ENCODE measurements at regions of chr11 and their contacts with region 1.

Region 1: GRCh38 chr11:86041975-86042378 is 26.9 kb downstream of the PICALM start:
- ATAC-seq: peak; percentile 59 to 95 (median 80)
- H3K4me3 ChIP-seq: no peak overlapping the region
- H3K27ac ChIP-seq: no peak overlapping the region
- H3K4me1 ChIP-seq: no peaks in the 10 kb centered on the region

Region 2: DNA sequence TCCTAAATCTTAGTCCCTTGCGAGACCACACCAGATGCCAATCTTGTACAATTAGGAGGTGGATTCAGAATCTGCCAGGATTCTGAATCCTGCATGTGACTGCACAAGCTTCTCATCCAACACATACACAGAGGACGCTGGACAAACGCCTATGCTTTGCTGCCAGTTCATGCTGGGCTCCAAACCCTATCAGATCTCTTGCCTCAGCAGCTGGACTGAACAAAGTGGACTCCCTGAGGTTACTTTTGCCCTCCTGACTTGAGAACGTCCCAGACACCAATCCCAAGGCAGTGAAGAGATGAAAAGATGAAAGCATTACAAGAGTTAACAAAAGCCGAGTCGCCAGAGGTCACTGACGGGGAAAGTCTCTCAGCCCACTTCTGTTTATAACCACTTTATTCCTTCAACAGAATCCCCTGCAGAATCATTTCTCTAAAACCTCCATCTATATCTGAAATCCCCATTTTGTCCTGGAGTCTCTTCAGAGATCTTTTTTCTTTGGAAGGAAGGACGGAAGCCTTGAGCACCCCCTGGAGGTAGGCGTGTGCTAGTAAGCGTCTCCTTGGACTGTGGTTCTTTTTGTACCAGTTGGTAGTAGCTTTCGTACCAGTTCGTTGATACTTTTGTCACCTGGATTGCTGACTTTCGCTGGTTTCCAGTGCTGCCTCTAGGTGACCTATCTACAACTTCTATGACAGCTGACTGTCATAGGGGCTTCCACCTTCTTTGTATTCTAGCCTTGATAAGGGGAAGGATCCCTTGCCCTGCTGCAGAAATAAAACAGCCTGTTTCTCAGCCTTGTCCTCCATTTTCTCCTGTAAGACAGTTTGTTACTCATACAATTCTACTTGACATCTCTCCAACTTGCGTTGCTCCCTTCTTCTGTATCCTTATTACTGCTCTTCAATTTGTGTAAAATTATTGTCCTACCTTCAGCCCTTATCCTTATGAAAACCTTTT is 176.4 kb after region 1 on chr11:
- in situ Hi-C with region 1: loop called in 2 of 9 experiments (anchors 25 kb)
- ATAC-seq: peak in 4 of 8 experiments; percentile 27 to 99 (median 98)
- H3K4me3 ChIP-seq: no peak overlapping the region
- H3K27ac ChIP-seq: no peak overlapping the region
- H3K4me1 ChIP-seq: no peaks in the 10 kb centered on the region

Region 3: DNA sequence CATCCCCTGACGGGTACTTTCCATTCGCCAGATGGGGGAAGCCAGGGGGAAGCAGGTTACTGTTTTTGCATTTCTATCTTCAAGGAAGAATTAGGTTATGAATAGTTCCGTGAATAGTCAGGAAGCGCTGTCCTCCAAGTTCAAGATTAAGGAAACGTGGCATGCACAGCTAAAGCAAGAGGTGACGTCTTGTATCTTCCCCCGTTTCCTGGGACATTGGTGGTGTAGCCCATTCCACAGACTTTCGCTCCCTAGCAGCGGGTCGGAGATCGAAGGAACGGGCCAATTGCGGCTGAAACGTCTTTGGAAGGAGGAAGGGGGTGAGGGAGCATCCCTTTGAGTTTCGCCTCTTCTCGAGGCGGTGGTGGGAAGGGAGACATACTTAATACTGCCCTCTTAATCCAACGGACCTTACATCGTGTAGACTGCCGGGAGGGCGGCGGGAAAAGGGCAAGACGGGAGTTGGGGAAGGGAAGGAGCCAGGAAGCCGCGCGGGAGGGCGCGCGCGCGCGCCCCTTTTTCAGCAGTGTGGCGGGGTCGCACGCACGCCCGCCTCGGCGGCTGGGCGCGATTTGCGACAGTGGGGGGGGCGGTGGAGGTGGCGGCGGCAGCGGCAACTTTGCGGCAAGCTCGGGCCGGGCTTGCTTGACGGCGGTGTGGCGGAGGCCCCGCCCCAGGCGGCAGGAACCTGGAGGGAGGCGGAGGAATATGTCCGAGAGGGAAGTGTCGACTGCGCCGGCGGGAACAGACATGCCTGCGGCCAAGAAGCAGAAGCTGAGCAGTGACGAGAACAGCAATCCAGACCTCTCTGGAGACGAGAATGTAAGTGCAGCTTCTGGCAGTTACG is 202.8 kb after region 1 on chr11 and contains the start of gene EED:
- in situ Hi-C with region 1: loop called in 1 of 9 experiments (anchors 25 kb)
- ATAC-seq: peak; percentile 81 to 89 (median 86)
- H3K4me3 ChIP-seq: peak within 1 kb of the TSS; percentile 83 to 97 (median 92)
- H3K27ac ChIP-seq: peak within 1 kb of the TSS; percentile 99
- H3K4me1 ChIP-seq: peaks cover 4 to 17% of the 10 kb centered on the region in 2 donors
- total RNA-seq, gene EED: 11.1 to 36.5 (median 17.0) TPM